ENCODE measurements at regions of chr1 and their contacts with region 1.

Region 1: DNA sequence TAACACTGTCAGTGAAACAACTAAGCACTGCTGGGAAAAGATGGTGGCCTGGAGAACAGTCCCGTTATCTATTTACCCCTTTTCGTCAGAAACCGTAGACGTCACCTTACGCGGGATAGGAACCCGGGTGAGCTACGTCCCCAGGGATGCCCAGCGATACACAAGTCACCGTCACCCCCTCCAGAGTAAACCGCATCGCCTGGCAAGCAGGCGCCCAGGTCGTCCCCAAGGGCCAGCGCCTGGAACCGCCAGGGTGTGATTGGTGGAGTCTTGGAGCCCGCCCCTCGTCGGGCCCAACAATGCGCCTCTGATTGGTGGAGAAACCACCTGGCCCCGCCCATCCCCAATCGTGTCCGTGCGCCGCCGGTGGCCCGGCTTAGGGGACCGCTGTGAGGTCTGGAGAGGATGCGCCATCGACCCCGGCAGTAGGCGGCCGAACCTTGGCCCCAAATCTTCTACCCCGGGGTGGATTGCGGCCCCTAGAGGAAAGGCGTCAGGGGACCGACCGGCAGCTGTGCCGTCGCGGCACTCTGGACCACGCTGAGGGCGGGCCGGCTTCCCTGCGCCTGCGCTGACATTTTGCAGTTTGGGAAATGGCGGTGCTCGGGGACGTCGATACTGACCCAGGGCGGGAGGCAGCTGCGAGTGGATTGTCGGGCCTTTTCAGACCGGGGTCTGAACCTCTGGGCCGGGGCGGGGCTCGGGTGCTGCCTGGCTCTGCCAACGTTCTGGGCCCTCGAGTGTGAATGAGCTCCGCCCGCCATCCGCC is 34.4 kb downstream of the SLC2A1 start:
- DNase-seq: peak; percentile 96 to 98
- ATAC-seq: peak; percentile 98
- H3K4me3 ChIP-seq: peak overlapping the region; percentile 45 to 62
- H3K27ac ChIP-seq: peak overlapping the region; percentile 53 to 87
- H3K4me1 ChIP-seq: no peaks in the 10 kb centered on the region
- H3K27me3 ChIP-seq: no peaks in the 10 kb centered on the region

Region 2: DNA sequence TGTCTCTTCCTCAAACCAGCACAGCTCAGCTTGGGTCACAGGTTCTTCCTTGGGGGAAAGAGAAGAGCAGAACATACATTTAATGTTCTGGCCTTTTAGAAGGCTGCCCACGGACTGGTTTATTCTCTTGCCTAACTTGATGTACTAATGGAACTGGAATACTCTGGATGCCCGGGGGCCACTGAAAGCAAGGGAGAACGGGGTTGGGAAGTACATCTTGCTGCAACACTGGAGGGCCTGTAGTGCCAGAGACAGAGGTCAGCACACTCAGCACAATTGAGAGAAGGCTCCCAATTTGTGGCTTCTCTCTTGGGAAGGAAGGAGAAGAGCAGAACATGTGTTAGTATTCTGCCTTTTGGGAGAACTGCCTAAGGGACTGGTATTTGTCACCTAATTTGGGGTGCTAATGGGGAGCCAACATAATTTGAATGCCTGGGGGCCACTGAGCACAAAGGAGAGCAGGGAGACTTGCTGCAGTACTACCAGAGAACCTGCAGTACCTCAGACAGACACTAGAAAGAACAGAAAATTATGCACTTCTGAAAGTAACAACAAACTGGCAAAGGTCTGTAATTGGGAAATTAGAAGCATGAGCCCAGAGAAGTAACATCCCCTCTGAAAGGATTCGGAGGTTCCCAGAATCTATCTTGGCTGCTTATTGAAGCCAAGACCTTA is 63.8 kb before region 1 on chr1:
- intact Hi-C with region 1: no loop called
- DNase-seq: no peak
- ATAC-seq: no peak
- H3K4me3 ChIP-seq: no peak overlapping the region
- H3K27ac ChIP-seq: no peak overlapping the region
- H3K4me1 ChIP-seq: no peaks in the 10 kb centered on the region
- H3K27me3 ChIP-seq: no peaks in the 10 kb centered on the region

Region 3: GRCh38 chr1:42886800-42887199 is 37.5 kb before region 1 on chr1:
- intact Hi-C with region 1: no loop called
- DNase-seq: no peak
- ATAC-seq: no peak
- H3K4me3 ChIP-seq: no peak overlapping the region
- H3K27ac ChIP-seq: no peak overlapping the region
- H3K4me1 ChIP-seq: no peaks in the 10 kb centered on the region
- H3K27me3 ChIP-seq: no peaks in the 10 kb centered on the region

Region 4: DNA sequence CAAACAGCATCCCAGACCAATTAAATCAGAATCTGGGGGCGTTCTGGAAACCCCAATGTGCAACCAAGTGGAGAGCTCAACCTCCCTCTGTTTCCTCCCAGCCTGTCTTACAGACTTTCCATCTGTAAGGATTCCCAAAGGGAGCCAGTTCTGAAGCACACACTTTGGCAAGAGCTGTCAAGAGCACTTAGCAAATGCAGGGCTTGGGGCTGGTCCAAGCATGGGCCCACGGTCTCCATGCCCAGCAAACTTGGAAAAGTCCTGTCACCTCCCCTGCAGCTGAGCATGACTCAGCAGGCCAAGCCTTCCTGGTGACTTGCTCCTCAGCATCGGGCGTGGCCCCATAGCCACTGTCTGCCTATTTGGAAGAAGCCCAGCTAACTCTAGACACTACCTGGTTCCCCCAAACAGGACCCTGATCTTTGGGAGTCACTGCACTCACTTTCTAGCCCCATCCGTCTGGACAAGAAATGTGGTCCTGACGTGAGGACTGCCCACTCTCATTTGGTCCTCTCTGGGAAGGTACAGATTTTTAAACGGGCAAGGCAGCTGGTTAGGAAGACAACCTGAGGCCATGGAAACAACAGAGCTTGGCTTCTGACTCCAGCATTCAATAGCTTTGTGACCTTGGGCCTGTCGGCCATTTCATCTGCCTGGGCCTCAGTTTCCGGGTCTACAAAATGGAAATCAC is 17.5 kb after region 1 on chr1:
- intact Hi-C with region 1: loop called in 1 of 2 experiments (anchors 2 kb)
- DNase-seq: peak; percentile 93 to 94
- ATAC-seq: peak; percentile 82
- H3K4me3 ChIP-seq: no peak overlapping the region
- H3K27ac ChIP-seq: peak overlapping the region; percentile 91 to 95
- H3K4me1 ChIP-seq: peaks cover 4 to 9% of the 10 kb centered on the region in 2 donors
- H3K27me3 ChIP-seq: no peaks in the 10 kb centered on the region

Region 5: GRCh38 chr1:42958488-42959319 is 34.4 kb after region 1 on chr1 and contains the start of gene SLC2A1:
- intact Hi-C with region 1: loop called (anchors 2 to 5 kb)
- DNase-seq: peak; percentile 94 to 97
- ATAC-seq: peak; percentile 93
- H3K4me3 ChIP-seq: peak within 1 kb of the TSS; percentile 77 to 92
- H3K27ac ChIP-seq: peak within 1 kb of the TSS; percentile 78
- H3K4me1 ChIP-seq: no peaks in the 10 kb centered on the region
- H3K27me3 ChIP-seq: no peaks in the 10 kb centered on the region
- total RNA-seq, gene SLC2A1: 87.7 to 124 TPM

Region 6: DNA sequence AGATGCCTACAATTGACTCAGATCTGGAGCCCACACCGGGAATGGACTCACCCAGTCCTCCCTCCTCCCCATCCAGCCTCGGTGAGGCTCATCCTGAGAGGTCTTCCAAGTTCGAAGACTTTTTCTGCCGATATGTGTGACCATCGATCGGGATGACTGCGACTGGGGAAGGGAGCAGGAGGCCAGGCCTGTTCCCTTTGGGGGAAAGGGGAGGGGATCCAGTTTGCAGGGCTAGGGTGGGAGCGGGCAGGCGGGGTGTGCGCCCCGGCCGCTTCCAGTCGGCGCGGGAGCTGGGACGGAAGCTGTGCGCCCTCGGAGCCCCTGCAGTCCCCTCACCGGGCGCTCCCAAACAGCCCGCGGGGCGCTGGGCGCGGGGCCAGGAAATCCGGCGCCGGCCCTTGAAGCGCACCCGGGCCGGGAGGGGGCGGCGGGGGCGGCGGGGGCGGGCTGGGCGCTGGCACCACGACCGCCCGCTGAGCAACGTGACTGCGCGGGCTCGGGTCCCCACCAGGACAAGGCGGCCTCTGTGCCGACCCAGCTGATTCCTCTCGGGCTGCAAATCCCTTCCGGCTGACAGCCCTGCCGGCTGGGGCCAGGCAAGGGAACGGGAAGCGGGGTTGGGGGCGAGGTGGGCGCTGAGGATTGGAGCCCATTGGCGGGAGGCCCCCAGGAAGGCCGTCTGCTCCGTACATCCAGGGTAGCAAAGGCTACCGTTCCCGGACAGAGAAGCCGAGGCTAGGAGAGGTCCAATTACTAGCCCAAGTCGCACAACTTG is 143.9 kb after region 1 on chr1:
- intact Hi-C with region 1: no loop called
- DNase-seq: peak in 1 of 2 donors; percentile 78
- ATAC-seq: no peak
- H3K4me3 ChIP-seq: peak overlapping the region; percentile 28 to 36
- H3K27ac ChIP-seq: no peak overlapping the region
- H3K4me1 ChIP-seq: no peaks in the 10 kb centered on the region
- H3K27me3 ChIP-seq: no peaks in the 10 kb centered on the region

Region 7: GRCh38 chr1:43171876-43172526 is 247.7 kb after region 1 on chr1 and contains the starts of genes CFAP57 and EBNA1BP2:
- intact Hi-C with region 1: loop called in 1 of 2 experiments (anchors 5 kb)
- DNase-seq: peak; percentile 93 to 95
- ATAC-seq: peak; percentile 95
- H3K4me3 ChIP-seq: peak within 1 kb of the TSS; percentile 23 to 45
- H3K27ac ChIP-seq: no peak within 1 kb of the TSS
- H3K4me1 ChIP-seq: no peaks in the 10 kb centered on the region
- H3K27me3 ChIP-seq: no peaks in the 10 kb centered on the region
- total RNA-seq, gene CFAP57: 0.13 TPM in 1 of 2 donors, not detected in the other
- total RNA-seq, gene EBNA1BP2: 28.0 to 29.0 TPM

Measured in aorta (tissue), 5 donors.